ENCODE measurements at regions of chr1 and their contacts with region 1.

Region 1: GRCh38 chr1:111565079-111565478 is 54.5 kb upstream of the RAP1A start:
- DNase-seq: no peak
- ATAC-seq: no peak
- H3K4me3 ChIP-seq: no peak overlapping the region
- H3K4me3 Mint-ChIP-seq: no peak overlapping the region
- H3K27ac ChIP-seq: no peak overlapping the region
- H3K27ac Mint-ChIP-seq: no peak overlapping the region
- H3K4me1 ChIP-seq: no peaks in the 10 kb centered on the region
- H3K4me1 Mint-ChIP-seq: peaks cover under 1% of the 10 kb centered on the region
- H3K27me3 ChIP-seq: no peaks in the 10 kb centered on the region
- H3K27me3 Mint-ChIP-seq: no peaks in the 10 kb centered on the region
- CTCF ChIP-seq: no peak

Region 2: GRCh38 chr1:111648806-111649205 is 83.7 kb after region 1 on chr1:
- CTCF ChIA-PET with region 1: no interaction called
- POLR2A ChIA-PET with region 1: no interaction called
- intact Hi-C with region 1: loop called in 1 of 2 experiments (anchors 5 kb)
- DNase-seq: no peak
- ATAC-seq: no peak
- H3K4me3 ChIP-seq: no peak overlapping the region
- H3K4me3 Mint-ChIP-seq: no peak overlapping the region
- H3K27ac ChIP-seq: no peak overlapping the region
- H3K27ac Mint-ChIP-seq: peak overlapping the region; percentile 79
- H3K4me1 ChIP-seq: peaks cover 60% of the 10 kb centered on the region
- H3K4me1 Mint-ChIP-seq: peaks cover 95% of the 10 kb centered on the region
- H3K27me3 ChIP-seq: no peaks in the 10 kb centered on the region
- H3K27me3 Mint-ChIP-seq: no peaks in the 10 kb centered on the region
- CTCF ChIP-seq: no peak